A549 (cell line): ENCODE measurements at regions of chr20 and their contacts with region 1.

Region 1: DNA sequence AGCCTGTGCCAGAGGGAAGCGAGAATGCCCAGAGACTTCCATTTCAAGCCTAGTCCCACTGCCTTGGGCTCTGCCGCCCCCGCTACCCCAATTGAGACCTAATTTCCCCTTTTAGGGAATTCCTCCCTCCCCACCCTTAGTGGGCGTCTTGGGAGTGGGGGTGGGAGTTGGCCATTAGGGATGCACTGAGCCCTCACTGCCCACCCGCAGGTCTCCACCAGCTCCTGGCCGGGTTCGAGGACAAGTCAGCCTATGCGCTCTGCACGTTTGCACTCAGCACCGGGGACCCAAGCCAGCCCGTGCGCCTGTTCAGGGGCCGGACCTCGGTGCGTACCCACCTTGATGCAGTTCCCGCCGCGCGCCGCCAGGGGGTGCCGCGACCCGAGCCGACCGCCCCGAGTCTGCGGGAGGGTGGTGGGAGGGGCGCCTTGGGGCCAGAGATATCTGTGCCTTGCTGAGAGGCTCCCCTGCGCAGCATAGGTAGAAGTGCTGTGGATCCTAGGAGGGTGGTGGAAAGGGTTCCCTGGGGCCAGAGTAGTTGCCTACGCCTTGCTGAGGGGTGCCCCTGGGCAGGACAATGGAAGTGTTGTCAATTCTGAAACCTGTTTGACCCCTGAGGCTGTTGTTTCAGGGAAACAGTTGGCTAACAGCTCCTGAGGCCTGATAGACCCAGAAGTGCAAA is 9.2 kb downstream of the ITPA start:
- DNase-seq: peak; percentile 63 to 89
- ATAC-seq: peak; percentile 84 to 89
- H3K4me3 ChIP-seq: no peak overlapping the region
- H3K27ac ChIP-seq: peak overlapping the region; percentile 34 to 49; a peak in 4 of 6 replicates
- H3K4me1 ChIP-seq: peaks cover 36% of the 10 kb centered on the region
- CTCF ChIP-seq: peak; percentile 90
- EP300 ChIP-seq: no peak
- POLR2A ChIP-seq: no peak
- RAD21 ChIP-seq: peak; percentile 76 to 84

Region 2: GRCh38 chr20:3032624-3033023 is 185.8 kb before region 1 on chr20:
- CTCF ChIA-PET with region 1: no interaction called
- POLR2A ChIA-PET with region 1: no interaction called
- DNase-seq: no peak
- ATAC-seq: no peak
- H3K4me3 ChIP-seq: no peak overlapping the region
- H3K27ac ChIP-seq: no peak overlapping the region
- H3K4me1 ChIP-seq: no peaks in the 10 kb centered on the region
- CTCF ChIP-seq: no peak
- EP300 ChIP-seq: no peak
- POLR2A ChIP-seq: no peak
- RAD21 ChIP-seq: no peak

Region 3: DNA sequence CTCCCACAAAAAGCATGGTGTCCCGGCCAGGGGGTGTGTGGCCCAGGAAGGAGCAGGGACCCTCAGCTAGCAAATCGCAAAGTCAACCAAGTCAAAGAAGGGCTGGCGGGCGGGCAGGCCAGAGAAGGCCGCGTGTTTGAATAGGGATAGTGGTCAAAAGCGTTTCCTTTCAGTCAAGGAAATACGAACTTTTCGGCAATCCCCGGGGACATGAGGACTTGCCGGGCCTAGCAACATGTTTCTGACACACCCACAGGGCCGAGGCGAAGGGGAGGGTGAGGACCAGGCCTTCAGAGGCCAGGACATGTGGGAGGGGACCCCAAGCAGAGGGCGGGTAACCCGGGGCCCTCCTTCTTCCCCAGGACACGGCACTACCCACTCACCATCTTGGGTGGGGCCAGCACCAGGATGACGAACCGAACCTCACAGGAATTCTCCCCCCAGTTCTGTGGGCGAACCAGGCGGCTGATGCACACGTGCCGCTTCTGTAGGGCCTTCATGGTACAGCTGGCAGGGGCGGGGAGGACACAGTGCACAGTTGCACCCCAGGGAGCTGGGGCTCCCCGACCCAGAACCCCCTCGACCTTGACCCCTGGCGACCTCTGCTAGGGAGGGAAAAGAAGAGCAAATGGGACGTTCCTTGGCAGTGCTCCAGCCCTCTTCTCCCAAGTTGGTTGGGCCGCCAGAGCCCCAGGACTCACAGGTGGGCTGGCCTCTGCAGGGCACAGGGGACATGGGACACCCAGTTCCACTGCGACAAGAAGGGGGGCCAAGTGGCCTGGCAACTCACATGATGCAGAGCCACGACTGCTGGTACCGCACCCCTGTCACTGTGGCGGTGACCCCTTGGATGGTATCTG is 14.9 kb after region 1 on chr20:
- CTCF ChIA-PET with region 1: interaction called, 32 read pairs
- POLR2A ChIA-PET with region 1: no interaction called
- DNase-seq: no peak
- ATAC-seq: no peak
- H3K4me3 ChIP-seq: no peak overlapping the region
- H3K27ac ChIP-seq: no peak overlapping the region
- H3K4me1 ChIP-seq: peaks cover 24% of the 10 kb centered on the region
- CTCF ChIP-seq: no peak
- EP300 ChIP-seq: no peak
- POLR2A ChIP-seq: no peak
- RAD21 ChIP-seq: no peak

Region 4: GRCh38 chr20:3248167-3248992 is 29.9 kb after region 1 on chr20:
- CTCF ChIA-PET with region 1: interaction called, 69 read pairs
- POLR2A ChIA-PET with region 1: no interaction called
- DNase-seq: no peak
- ATAC-seq: no peak
- H3K4me3 ChIP-seq: no peak overlapping the region
- H3K27ac ChIP-seq: no peak overlapping the region
- H3K4me1 ChIP-seq: peaks cover 8% of the 10 kb centered on the region; the same call in 1 of the 3 replicates
- CTCF ChIP-seq: no peak
- EP300 ChIP-seq: no peak
- POLR2A ChIP-seq: no peak
- RAD21 ChIP-seq: no peak

Region 5: GRCh38 chr20:3262566-3262965 is 44.1 kb after region 1 on chr20:
- CTCF ChIA-PET with region 1: interaction called, 13 read pairs
- POLR2A ChIA-PET with region 1: no interaction called
- DNase-seq: no peak
- ATAC-seq: no peak
- H3K4me3 ChIP-seq: no peak overlapping the region
- H3K27ac ChIP-seq: no peak overlapping the region
- H3K4me1 ChIP-seq: no peaks in the 10 kb centered on the region
- CTCF ChIP-seq: no peak
- EP300 ChIP-seq: no peak
- POLR2A ChIP-seq: no peak
- RAD21 ChIP-seq: no peak

Region 6: GRCh38 chr20:3307078-3307477 is 88.6 kb after region 1 on chr20:
- CTCF ChIA-PET with region 1: interaction called, 105 read pairs
- POLR2A ChIA-PET with region 1: no interaction called
- DNase-seq: no peak
- ATAC-seq: no peak
- H3K4me3 ChIP-seq: no peak overlapping the region
- H3K27ac ChIP-seq: peak overlapping the region; percentile 28 to 48; a peak in 2 of 6 replicates
- H3K4me1 ChIP-seq: peaks cover 11% of the 10 kb centered on the region
- CTCF ChIP-seq: no peak
- EP300 ChIP-seq: no peak
- POLR2A ChIP-seq: no peak
- RAD21 ChIP-seq: no peak

Region 7: GRCh38 chr20:3312940-3313682 is 94.7 kb after region 1 on chr20:
- CTCF ChIA-PET with region 1: interaction called, 105 read pairs
- POLR2A ChIA-PET with region 1: no interaction called
- DNase-seq: peak; percentile 24 to 70
- ATAC-seq: peak; percentile 81 to 89
- H3K4me3 ChIP-seq: no peak overlapping the region; the same call in 2 of the 3 replicates
- H3K27ac ChIP-seq: peak overlapping the region; percentile 79 to 82
- H3K4me1 ChIP-seq: peaks cover 35% of the 10 kb centered on the region
- CTCF ChIP-seq: no peak
- EP300 ChIP-seq: peak in 1 of 2 experiments; percentile 29; a peak in 1 of 5 replicates
- POLR2A ChIP-seq: no peak
- RAD21 ChIP-seq: no peak